Ascending aorta (tissue), 2 donors: ENCODE measurements at regions of chrX and their contacts with region 1.

Region 1: DNA sequence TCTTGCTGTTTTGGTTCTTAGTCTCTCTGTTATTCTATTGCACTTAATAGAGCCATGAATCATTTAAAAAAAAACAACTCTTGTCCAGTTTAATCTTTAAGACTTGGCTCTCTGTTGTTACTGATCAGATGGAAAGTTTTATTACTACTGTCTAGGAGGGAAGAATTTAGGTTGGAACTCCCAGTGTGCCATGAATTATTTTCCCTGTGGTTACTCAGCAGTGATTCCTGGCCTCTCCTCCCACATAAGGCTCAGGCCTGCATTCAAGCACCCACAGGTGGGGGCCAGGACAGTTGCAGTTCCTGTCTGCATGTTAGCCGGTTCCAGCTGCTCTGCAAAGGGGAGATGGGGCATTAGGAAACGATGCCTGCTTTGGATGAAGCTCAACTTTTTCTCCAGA is 29.8 kb upstream of the ESX1 start:
- DNase-seq: no peak
- H3K4me3 ChIP-seq: no peak overlapping the region
- H3K27ac ChIP-seq: no peak overlapping the region
- H3K4me1 ChIP-seq: peaks cover 0 to 13% of the 10 kb centered on the region in 2 donors
- H3K27me3 ChIP-seq: no peaks in the 10 kb centered on the region
- CTCF ChIP-seq: no peak

Region 2: DNA sequence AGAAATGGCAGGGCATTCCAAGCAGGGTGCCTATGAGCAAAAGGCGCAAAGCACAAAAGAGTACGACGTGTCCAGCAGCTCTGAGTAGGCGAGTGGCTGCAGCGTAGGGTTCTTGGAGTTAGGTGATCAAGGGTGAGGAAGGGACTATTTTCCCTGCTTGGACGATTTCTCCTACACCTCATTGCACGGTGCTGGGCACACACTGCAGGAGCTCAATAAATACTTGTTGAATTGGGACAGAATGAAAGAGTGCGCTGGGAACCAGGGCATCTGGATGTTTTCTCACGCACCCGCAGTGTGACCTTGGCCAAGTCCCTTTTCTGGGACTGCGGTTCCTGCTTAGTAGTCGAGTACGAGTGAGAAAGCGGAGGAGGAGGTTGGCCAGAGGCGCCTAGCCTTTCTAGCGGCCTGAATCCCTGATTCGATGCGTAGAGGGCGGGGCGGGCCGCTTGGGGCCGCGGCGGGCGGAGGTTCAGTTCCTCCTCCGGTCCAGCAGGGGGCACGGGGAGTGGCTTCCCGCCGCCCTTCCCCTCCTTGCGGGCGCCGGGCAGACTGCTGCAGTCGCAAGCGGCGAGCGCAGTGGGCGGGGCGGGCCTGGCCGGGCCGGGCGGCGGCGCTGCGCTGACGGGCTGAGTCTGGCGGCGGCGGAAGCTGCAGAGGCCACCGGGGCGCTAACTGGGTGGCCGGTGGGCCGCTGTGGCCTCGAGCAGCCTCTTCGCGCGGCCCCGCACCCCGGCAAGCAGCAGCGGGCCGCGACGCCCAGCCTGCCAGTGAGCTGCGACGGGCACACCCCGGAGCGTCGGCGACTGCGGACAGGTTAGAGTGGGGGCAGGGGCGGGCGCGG is 118.4 kb before region 1 on chrX and contains the start of gene FAM199X:
- intact Hi-C with region 1: loop called (anchors 5 kb)
- DNase-seq: peak; percentile 64 to 92
- H3K4me3 ChIP-seq: peak within 1 kb of the TSS; percentile 66 to 81
- H3K27ac ChIP-seq: peak within 1 kb of the TSS; percentile 88
- H3K4me1 ChIP-seq: no peaks in the 10 kb centered on the region
- H3K27me3 ChIP-seq: no peaks in the 10 kb centered on the region
- CTCF ChIP-seq: peak; percentile 50 to 72 (median 66)
- total RNA-seq, gene FAM199X: 10.4 TPM

Region 3: DNA sequence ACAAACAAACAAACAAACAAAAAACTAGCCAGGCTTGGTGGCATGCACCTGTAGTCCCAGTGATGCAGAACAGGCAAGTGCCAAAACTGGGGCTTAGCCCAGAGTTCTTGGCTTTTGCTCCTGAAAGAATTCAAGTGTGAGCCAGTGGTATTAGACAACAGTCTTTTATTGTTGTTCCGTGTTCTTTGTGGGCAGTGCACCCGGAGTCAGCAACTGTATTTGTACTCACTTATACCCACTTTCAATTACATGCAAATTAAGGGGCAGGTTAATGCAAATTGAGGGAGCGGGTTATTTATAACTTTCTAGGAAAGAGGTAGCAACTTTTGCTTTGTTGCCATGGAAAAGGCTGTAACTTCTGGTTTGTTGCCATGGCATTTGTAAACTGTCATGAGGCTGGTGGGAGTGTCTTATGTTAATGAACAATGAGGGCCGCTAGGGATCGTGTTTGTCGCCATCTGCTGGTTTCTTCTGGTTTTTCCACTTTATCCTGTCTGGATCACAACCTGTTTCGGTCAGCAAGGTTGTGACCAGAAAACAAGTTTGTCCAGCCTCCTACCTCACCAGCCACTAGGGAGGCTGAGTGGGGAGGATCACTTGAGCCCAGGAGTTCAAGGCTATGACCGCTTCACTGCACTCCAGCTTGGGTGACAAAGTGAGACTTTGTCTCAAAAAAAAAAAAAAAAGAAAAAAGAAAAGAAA is 59.1 kb after region 1 on chrX:
- intact Hi-C with region 1: loop called (anchors 5 kb)
- DNase-seq: no peak
- H3K4me3 ChIP-seq: no peak overlapping the region
- H3K27ac ChIP-seq: no peak overlapping the region
- H3K4me1 ChIP-seq: no peaks in the 10 kb centered on the region
- H3K27me3 ChIP-seq: no peaks in the 10 kb centered on the region
- CTCF ChIP-seq: peak in 2 of 3 experiments; percentile 38 to 43